OCI-LY7 (cell line): ENCODE measurements at regions of chr14 and their contacts with region 1.

Region 1: DNA sequence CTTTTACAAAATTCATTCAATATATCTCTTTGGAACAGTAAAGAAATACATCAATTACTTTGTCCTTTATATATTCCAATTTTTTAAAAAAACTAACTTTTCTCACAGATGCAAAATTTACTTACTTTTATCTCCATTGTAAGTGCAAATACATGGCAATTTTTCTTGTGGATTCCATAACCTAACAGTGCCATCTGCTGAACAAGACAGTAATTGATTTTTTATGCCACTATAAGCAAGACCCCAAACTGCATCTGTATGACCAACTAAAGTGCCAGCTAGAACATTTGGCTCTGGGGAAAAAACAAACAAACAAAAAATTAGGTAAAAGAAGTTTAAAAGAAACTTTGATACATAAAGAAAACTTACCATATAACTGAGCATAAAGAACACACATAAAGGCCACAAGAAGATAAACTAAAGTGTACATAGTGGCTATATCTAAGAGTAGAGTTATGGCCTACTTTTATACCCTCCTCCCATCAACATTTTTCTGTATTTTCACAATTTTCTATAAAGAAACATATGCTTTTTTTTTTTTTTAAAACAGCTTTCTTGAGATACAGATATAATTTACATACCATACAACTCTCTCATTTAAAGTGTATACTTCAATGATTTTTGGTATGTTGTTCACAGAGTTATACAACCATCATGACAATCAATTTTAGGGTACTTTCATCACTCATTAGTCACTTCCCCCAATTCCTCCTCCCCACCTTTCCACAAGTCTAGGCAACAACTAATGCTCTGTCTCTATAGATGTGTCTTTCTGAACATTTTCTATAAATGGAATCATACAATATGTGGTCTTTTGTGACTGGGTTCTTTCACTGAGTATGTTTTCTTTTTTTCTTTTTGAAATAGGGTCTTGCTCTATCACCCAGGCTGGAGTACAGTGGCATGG is 32.6 kb downstream of the COCH start:
- DNase-seq: peak; percentile 36
- H3K4me3 ChIP-seq: no peak overlapping the region
- H3K27ac ChIP-seq: no peak overlapping the region
- H3K4me1 ChIP-seq: no peaks in the 10 kb centered on the region
- CTCF ChIP-seq: peak; percentile 78

Region 2: DNA sequence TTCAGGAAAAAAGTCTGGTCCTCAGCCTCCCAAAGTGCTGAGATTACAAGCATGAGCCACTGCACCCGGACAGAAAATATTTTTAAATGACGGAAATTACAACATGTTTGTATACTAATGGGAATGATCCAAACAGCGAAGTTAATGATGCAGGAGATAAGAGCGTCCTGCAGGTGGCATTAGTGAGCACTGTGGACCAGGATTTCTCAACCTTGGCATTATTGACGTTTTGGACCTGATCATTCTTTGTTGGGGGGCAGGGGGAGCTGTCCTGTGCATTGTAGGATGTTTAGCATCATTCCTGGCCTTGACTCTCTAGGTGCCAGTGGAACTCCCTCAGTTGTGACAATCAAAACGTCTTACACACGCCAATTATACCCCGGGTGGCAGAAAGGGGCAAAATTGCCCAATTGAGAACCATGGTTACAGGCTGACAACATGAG is 250.8 kb before region 1 on chr14:
- CTCF ChIA-PET with region 1: no interaction called
- POLR2A ChIA-PET with region 1: no interaction called
- intact Hi-C with region 1: loop called (anchors 10 kb)
- DNase-seq: peak; percentile 60
- H3K4me3 ChIP-seq: no peak overlapping the region
- H3K27ac ChIP-seq: no peak overlapping the region
- H3K4me1 ChIP-seq: no peaks in the 10 kb centered on the region
- CTCF ChIP-seq: peak; percentile 84

Region 3: GRCh38 chr14:30921305-30921704 is 14.3 kb after region 1 on chr14:
- CTCF ChIA-PET with region 1: no interaction called
- POLR2A ChIA-PET with region 1: interaction called, 10 read pairs
- intact Hi-C with region 1: no loop called
- DNase-seq: peak; percentile 61
- H3K4me3 ChIP-seq: peak overlapping the region; percentile 33
- H3K27ac ChIP-seq: peak overlapping the region; percentile 20
- H3K4me1 ChIP-seq: peaks cover 21% of the 10 kb centered on the region
- CTCF ChIP-seq: no peak